ENCODE measurements at regions of chr12 and their contacts with region 1.

Region 1: DNA sequence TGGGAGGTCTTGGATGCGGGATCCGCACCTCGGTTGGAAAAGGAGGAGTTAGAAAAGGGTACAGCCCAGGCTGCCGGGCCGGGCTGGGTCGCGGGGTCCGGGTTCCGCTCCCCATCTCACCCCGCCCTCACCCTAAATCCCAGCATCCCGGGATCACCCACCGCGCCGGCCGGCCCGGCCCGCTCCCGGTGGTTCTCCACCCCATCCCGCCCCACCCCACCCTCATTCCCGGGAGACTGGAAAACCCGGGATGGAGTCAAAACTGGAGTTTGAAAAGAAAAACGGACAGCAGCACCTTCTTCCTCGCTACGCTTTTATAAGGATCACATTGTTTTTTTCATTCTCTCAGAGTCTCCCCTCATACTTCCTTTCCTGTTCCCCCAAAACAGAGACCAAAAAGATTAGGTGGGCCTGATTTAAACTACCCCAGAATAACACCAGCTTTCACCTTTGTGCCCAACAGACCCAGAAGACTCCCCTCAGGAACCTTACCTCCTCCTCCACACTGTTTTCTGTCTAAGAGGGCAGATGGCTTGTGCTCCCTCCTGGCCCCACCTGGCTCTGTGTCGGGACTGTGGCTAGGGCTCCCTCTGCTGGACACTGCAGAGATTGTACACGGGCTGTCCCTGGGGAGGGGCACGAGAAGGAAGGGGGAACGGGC is 2.8 kb downstream of the GLI1 start:
- DNase-seq: peak; percentile 81
- ATAC-seq: peak; percentile 82
- H3K4me3 ChIP-seq: peak overlapping the region; percentile 68
- H3K27ac ChIP-seq: no peak overlapping the region
- H3K4me1 ChIP-seq: peaks cover 35% of the 10 kb centered on the region
- H3K27me3 ChIP-seq: 0 out of 4 replicates have a peak, but pooled peaks cover 0 to 4% of the 10 kb centered on the region in 2 experiments
- CTCF ChIP-seq: peak; percentile 94 to 99 (median 98)
- EP300 ChIP-seq: no peak
- POLR2A ChIP-seq: 0 out of 2 replicates have a peak, but pooled peaks have one; percentile 24
- RAD21 ChIP-seq: peak; percentile 75

Region 2: DNA sequence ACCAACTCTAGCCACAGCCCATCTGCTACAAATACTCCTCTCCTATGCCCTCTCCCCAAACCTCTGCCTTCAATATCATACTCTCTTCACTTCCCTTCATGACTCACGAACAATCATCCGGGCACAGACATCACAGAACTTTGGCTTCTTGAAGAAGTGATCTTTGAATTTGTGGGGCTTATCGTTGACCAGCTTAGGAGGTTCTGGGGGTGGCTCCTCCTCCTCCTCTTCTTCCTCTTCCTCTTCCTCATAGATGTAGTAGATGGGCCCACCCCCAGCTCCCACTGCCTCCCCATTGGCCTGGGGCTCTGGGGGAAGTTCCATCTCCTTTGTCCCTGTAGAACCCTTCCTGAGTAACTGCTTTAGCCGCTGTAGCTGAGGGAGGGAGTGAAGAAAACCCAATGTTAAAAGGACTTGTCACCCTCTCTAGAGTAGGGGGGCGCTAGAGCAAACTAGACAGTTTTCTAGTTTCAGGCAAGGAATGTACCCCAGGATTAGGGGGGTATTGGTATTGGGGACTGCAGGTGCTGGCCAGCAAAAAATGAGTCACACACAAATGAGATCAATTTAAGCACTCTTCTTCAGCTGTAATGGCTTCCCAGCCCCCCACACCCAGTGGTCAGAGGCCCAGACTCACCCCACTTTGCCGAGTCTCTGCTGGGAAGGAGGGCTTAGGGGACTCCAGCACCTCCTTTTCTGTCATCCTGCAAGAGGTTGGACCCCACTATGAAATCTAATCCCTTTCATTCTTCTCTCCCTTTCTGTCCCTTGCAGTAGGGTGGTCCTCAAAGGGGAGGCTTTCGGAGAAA is 213.2 kb before region 1 on chr12:
- CTCF ChIA-PET with region 1: interaction called, 90 read pairs
- POLR2A ChIA-PET with region 1: interaction called, 6 read pairs
- RAD21 ChIA-PET with region 1: interaction called, 4 read pairs
- SMC1A ChIA-PET with region 1: interaction called, 3 read pairs
- in situ Hi-C with region 1: no loop called
- intact Hi-C with region 1: no loop called
- DNase-seq: no peak
- ATAC-seq: peak; percentile 95
- H3K4me3 ChIP-seq: peak overlapping the region; percentile 41; the same call in 1 of the 2 replicates
- H3K27ac ChIP-seq: no peak overlapping the region
- H3K4me1 ChIP-seq: peaks cover 1% of the 10 kb centered on the region; the same call in 1 of the 2 replicates
- H3K27me3 ChIP-seq: no peaks in the 10 kb centered on the region
- CTCF ChIP-seq: no peak
- EP300 ChIP-seq: no peak
- POLR2A ChIP-seq: no peak
- RAD21 ChIP-seq: no peak

Region 3: DNA sequence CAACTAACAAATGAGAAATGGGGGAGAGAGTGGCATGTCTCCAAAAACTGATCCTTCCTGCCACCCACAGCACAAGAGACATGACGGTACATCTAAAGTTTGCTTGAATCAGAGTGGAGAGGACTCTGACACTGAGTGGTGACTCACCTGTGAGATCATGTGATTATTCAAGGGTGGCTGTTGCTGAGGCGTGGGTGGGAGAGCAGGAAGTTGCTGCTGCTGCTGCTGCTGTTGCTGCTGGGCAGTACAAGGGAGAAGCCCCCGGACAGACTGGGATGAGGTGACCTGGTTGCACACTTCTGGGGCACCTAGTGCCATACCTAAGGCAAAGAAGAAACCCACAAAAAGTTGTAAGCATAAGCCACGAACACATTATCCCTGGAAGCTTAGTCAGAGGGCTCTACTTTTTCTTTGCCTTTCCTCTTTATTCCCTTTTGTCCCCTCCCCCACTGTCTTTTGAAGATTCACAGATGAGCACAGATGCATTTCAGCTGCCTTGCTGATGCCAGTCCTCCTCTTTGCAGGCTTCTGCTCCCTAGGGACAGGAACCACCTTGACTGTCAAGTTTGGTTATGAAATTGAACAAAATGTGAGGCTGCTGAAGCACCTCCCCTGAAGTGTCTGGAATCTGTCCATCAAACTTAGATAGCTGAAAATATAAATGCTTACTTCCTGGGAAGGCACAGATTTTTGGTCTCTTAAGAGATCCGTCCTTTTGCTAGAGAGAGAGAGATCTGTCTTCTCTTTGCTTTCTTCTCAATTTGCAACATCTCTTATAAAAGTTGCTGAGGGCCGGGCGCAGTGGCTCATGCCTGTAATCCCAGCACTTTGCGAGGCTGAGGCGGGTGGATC is 181.9 kb before region 1 on chr12:
- CTCF ChIA-PET with region 1: interaction called, 10 read pairs
- POLR2A ChIA-PET with region 1: interaction called, 4 read pairs
- RAD21 ChIA-PET with region 1: interaction called, 3 read pairs
- SMC1A ChIA-PET with region 1: interaction called, 3 read pairs
- in situ Hi-C with region 1: no loop called
- intact Hi-C with region 1: no loop called
- DNase-seq: peak; percentile 74
- ATAC-seq: peak; percentile 99
- H3K4me3 ChIP-seq: no peak overlapping the region
- H3K27ac ChIP-seq: peak overlapping the region; percentile 61
- H3K4me1 ChIP-seq: peaks cover 12% of the 10 kb centered on the region
- H3K27me3 ChIP-seq: no peaks in the 10 kb centered on the region
- CTCF ChIP-seq: no peak
- EP300 ChIP-seq: 0 out of 4 replicates have a peak, but pooled peaks of 1 of the 2 experiments have one; percentile 6
- POLR2A ChIP-seq: peak; percentile 79
- RAD21 ChIP-seq: no peak

Region 4: DNA sequence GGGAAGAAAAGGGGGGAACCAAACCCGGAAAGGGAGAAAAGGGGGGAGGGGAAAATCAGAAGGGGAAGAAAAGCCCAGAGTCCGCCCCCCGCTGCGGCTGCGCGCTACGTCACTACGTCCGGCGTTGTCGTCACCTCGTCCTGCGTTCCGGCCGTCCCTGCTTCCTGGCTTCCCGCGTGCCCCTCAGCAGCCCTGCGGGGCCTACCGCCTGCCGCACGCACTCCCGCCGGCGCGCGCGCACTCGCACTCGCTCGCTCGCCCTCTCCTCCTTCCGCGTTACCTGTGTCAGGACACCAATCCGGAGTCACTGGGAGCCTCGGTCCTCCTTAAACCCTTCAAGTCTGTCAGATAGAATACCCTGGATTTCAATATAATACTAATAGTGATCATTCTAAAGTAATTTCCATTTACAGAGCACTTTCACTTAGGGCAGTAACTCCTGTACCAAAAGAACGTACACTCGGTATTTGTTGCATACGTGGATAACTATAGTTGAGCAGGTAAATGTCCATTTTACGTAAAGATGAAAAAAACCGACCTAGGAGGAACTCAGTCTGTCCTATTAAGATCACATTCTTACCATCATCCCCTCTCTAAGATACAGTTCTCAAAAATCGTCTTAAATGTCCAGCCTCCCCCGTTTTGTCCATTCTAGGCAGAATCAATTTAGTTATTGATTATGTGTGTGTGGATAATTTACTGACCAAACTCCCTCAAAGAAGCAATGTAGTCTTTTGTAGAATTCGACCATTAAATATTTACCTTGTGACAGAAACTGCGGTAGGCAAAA is 31.3 kb before region 1 on chr12 and contains the start of gene R3HDM2:
- CTCF ChIA-PET with region 1: interaction called, 22 read pairs
- POLR2A ChIA-PET with region 1: interaction called, 11 read pairs
- RAD21 ChIA-PET with region 1: interaction called, 14 read pairs
- SMC1A ChIA-PET with region 1: interaction called, 14 read pairs
- in situ Hi-C with region 1: no loop called
- intact Hi-C with region 1: no loop called
- DNase-seq: peak; percentile 77
- ATAC-seq: peak; percentile 96
- H3K4me3 ChIP-seq: peak within 1 kb of the TSS; percentile 88
- H3K27ac ChIP-seq: peak within 1 kb of the TSS; percentile 90
- H3K4me1 ChIP-seq: peaks cover 5% of the 10 kb centered on the region; the same call in 1 of the 2 replicates
- H3K27me3 ChIP-seq: no peaks in the 10 kb centered on the region
- CTCF ChIP-seq: no peak
- EP300 ChIP-seq: no peak
- POLR2A ChIP-seq: peak; percentile 96
- RAD21 ChIP-seq: no peak
- polyA plus RNA-seq, gene R3HDM2: 4.6 to 6.2 TPM

Region 5: DNA sequence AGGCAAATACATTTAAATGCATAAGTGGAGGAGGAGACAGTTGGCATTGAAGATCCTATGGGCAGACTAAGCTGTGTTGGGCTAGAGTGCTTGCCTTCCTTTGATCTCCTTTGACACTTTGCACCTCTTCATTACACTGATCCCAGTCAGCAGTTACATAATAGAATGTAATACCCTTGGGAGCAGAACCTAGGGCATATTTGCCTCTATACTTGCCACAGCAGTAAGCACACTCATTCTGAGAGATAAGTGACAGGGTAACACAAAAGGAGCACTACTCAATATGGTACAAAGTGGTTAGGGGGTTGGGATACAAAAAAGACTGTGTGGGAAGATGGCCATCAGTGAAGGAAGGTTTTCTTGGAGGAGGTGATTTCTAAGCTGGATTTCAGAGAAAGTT is 34.4 kb after region 1 on chr12:
- CTCF ChIA-PET with region 1: no interaction called
- POLR2A ChIA-PET with region 1: no interaction called
- RAD21 ChIA-PET with region 1: no interaction called
- SMC1A ChIA-PET with region 1: no interaction called
- in situ Hi-C with region 1: no loop called
- intact Hi-C with region 1: no loop called
- DNase-seq: no peak
- ATAC-seq: peak; percentile 80
- H3K4me3 ChIP-seq: no peak overlapping the region
- H3K27ac ChIP-seq: no peak overlapping the region
- H3K4me1 ChIP-seq: no peaks in the 10 kb centered on the region
- H3K27me3 ChIP-seq: no peaks in the 10 kb centered on the region
- CTCF ChIP-seq: no peak
- EP300 ChIP-seq: peak in 1 of 2 experiments; percentile 43; a peak in 1 of 4 replicates
- POLR2A ChIP-seq: no peak
- RAD21 ChIP-seq: no peak

Region 6: DNA sequence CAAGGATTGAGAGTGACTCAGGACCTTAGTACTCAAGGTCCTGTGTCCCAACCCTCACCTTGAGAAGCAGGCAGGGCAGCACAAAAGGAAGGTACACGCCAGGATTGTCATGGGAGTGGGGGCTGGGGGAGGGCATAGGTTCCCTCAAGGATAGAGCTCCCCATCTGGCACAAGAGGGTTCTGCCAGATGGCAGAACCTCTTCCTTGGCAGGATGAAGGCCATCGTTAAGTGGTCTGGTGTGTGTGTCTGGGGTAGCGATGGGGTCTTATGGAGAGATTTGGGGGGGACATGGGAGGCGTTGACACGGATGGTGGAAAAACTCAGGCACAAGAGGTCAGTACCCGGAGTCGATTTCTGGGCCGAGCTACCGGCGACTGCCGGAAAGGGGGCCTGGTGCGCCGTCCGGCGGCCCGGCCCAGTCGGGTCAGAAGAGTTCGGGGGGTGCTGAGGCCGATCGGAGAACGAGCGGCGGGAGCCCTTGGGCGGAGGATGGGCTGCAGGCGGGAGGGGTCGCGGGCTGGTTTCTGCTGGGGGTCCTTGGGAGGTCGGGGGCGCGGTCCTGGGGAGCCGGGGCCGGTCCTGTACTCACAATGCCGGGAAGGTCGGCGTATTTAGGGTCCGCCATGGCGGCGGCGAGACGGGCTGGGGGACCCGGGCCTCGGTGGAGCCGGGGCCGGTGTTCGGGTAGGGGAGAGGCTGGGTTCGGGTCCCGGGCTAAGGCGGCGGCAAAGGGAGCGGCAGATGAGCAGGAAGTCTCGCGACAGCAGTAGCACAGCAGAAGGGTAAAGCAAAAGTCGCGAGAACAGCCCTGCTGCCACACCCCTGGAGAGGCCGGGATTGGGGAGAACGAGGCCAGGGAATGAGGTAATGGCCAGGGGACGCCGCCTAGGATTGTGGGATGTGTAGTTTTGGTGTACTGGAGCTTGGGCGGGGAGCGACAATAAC is 84.3 kb after region 1 on chr12 and contains the start of gene DCTN2:
- CTCF ChIA-PET with region 1: interaction called, 8 read pairs
- POLR2A ChIA-PET with region 1: no interaction called
- RAD21 ChIA-PET with region 1: interaction called, 10 read pairs
- SMC1A ChIA-PET with region 1: interaction called, 6 read pairs
- in situ Hi-C with region 1: no loop called
- intact Hi-C with region 1: no loop called
- DNase-seq: peak; percentile 92
- ATAC-seq: peak; percentile 97
- H3K4me3 ChIP-seq: peak within 1 kb of the TSS; percentile 87
- H3K27ac ChIP-seq: peak within 1 kb of the TSS; percentile 67
- H3K4me1 ChIP-seq: peaks cover 9% of the 10 kb centered on the region; the same call in 1 of the 2 replicates
- H3K27me3 ChIP-seq: no peaks in the 10 kb centered on the region; a peak in 2 of 4 replicates
- CTCF ChIP-seq: peak; percentile 15 to 31 (median 30); a peak in 4 of 6 replicates
- EP300 ChIP-seq: no peak
- POLR2A ChIP-seq: peak; percentile 76
- RAD21 ChIP-seq: peak; percentile 20; the same call in 1 of the 2 replicates
- polyA plus RNA-seq, gene DCTN2: 32.3 to 60.7 TPM

Region 7: GRCh38 chr12:57614178-57614947 is 152.0 kb after region 1 on chr12:
- CTCF ChIA-PET with region 1: interaction called, 11 read pairs
- POLR2A ChIA-PET with region 1: interaction called, 4 read pairs
- RAD21 ChIA-PET with region 1: interaction called, 6 read pairs
- SMC1A ChIA-PET with region 1: interaction called, 8 read pairs
- in situ Hi-C with region 1: no loop called
- intact Hi-C with region 1: no loop called
- DNase-seq: peak; percentile 33
- ATAC-seq: peak; percentile 76
- H3K4me3 ChIP-seq: no peak overlapping the region
- H3K27ac ChIP-seq: no peak overlapping the region; the same call in 1 of the 2 replicates
- H3K4me1 ChIP-seq: peaks cover 10% of the 10 kb centered on the region
- H3K27me3 ChIP-seq: peaks cover under 1 to 4% of the 10 kb centered on the region in 2 experiments; a peak in 2 of 4 replicates
- CTCF ChIP-seq: no peak
- EP300 ChIP-seq: no peak
- POLR2A ChIP-seq: no peak
- RAD21 ChIP-seq: no peak

Measured in GM12878 (cell line).